ENCODE measurements at regions of chr22 and their contacts with region 1.

Region 1: DNA sequence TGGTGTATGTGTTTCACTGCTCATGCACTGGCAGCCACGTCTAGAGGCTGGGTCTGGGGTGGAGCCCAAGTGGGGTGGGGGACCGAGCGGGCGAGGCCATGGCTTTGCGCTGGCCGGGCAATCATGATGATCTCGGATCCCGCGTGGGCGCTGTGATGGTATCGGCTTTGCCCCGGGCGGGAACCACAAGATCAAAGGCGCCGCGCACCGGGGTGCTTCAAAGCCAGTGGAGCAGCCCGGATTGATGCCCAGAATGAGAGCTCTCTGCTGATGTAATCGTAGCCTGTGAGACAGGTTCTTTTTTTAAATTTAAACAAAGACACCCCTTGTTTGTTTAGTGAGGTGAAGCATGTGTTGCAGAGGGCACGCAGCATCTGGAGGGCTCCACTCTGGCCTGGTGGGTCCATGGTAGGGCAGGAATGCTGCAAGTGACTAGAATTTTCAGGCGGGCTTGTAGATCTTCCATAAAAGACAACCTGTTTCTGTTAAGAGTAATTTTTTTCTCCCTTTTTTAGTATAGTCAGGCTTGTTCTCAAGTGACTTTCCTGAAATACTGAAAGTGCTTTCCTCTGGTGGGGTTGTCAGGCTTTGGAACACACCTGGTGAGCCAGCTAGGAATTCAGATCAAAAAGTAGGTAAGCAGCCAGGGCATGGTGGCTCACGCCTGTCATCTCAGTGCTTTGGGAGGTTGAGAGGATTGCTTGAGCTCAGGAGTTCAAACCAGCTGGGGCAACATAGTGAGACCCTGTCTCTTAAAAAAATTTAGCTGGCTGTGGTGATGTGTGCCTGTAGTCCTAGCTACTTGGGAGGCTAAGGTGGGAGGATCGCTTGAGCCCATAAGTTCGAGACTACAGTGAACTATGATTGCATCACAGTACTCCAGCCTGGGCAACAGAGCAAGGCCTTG is 40.7 kb downstream of the ZNRF3 start:
- DNase-seq: peak; percentile 35
- H3K4me3 ChIP-seq: peak overlapping the region in 1 of 3 experiments; percentile 7
- H3K27ac ChIP-seq: no peak overlapping the region
- H3K4me1 ChIP-seq: peaks cover 8% of the 10 kb centered on the region
- H3K27me3 ChIP-seq: no peaks in the 10 kb centered on the region
- CTCF ChIP-seq: no peak

Region 2: DNA sequence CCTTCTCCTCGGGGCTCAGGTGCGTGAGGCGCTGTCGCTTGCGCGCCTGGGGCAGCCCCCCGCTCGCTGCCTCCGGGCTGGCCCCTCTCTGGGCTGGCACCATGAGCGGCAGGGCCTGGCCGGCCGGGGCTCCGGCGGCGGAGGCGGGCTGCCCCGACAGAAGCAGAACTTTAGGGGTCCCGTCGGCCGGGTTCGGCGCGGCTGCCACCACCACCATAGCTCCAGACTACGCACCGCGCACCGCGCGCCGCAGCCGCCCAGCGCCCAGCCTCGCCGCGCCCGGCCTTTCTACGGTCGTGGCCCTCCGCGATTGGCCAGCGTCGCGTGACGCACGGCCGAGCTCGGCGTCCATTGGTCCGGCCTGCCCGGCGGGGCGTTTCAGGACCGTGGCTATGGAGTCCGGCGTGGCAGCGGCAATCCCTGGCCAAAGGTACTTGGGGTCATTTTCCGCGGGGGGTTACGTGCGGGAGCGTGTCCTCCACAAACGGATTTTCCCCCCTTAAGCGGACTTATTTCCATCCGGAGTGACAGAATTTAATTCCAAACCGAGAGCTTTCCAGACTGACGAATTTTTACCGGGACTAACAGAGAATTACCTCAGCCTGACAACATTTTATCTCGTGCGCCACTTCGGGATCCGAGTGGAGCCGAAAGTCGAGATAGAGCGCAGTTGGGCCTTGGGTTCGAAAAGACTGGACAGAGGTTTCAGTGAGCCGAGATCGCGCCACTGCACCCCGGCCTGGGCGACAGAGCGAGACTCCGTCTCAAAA is 123.6 kb before region 1 on chr22 and contains the start of gene XBP1:
- CTCF ChIA-PET with region 1: no interaction called
- dilution Hi-C with region 1: no loop called
- in situ Hi-C with region 1: no loop called
- intact Hi-C with region 1: no loop called
- DNase-seq: peak; percentile 95
- H3K4me3 ChIP-seq: peak within 1 kb of the TSS; percentile 67 to 86 (median 72)
- H3K27ac ChIP-seq: peak within 1 kb of the TSS; percentile 98
- H3K4me1 ChIP-seq: peaks cover 10% of the 10 kb centered on the region
- H3K27me3 ChIP-seq: no peaks in the 10 kb centered on the region
- CTCF ChIP-seq: no peak
- total RNA-seq, gene XBP1: 166 to 224 TPM

Region 3: DNA sequence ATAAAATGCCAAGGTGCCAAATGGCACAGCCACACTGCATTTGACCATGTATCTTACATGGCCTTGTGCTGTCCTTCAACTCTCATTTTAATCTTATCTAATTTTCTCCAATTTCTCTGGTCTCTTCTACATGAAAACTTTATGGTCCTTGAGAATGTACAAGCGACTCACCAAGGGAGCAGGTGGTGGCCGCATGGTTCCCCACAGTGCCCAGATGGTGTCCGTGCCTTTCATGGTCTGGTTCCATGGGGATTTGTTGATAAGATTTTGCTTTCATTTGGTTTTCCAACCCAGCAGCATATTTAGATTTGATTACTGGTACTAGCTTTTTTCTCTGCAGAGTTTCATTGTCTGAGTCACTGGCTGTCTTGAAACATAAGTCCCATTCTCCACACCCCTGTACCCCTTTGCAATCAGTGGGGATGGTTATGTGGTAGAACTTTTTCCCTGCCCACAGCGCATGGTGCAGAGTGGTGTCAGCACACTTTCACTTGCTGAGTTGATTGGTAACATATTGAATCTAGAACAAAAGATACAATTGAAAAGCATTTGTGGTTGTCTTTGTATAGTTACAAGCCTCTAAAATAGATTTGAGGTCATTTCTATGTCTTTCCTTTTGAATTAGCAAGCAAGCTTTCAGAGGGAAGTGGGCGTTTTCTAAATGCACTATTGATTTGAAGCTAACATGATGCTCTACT is 16.6 kb before region 1 on chr22:
- CTCF ChIA-PET with region 1: no interaction called
- dilution Hi-C with region 1: no loop called
- in situ Hi-C with region 1: no loop called
- intact Hi-C with region 1: no loop called
- DNase-seq: no peak
- H3K4me3 ChIP-seq: no peak overlapping the region
- H3K27ac ChIP-seq: no peak overlapping the region
- H3K4me1 ChIP-seq: peaks cover 34% of the 10 kb centered on the region
- H3K27me3 ChIP-seq: no peaks in the 10 kb centered on the region
- CTCF ChIP-seq: no peak

Region 4: GRCh38 chr22:28983787-28984441 is 59.8 kb after region 1 on chr22:
- CTCF ChIA-PET with region 1: no interaction called
- dilution Hi-C with region 1: no loop called
- in situ Hi-C with region 1: no loop called
- intact Hi-C with region 1: loop called (anchors 5 kb)
- DNase-seq: peak; percentile 41
- H3K4me3 ChIP-seq: no peak overlapping the region
- H3K27ac ChIP-seq: no peak overlapping the region
- H3K4me1 ChIP-seq: peaks cover 36% of the 10 kb centered on the region
- H3K27me3 ChIP-seq: no peaks in the 10 kb centered on the region
- CTCF ChIP-seq: no peak